IMR-90 (cell line): ENCODE measurements at regions of chr9 and their contacts with region 1.

Region 1: GRCh38 chr9:82202808-82203207 is 214.2 kb downstream of the SPATA31D1 start:
- DNase-seq: peak; percentile 81
- ATAC-seq: peak; percentile 70
- H3K4me3 ChIP-seq: no peak overlapping the region
- H3K27ac ChIP-seq: no peak overlapping the region
- H3K4me1 ChIP-seq: no peaks in the 10 kb centered on the region
- H3K27me3 ChIP-seq: no peaks in the 10 kb centered on the region
- CTCF ChIP-seq: no peak
- POLR2A ChIP-seq: no peak
- RAD21 ChIP-seq: no peak

Region 2: DNA sequence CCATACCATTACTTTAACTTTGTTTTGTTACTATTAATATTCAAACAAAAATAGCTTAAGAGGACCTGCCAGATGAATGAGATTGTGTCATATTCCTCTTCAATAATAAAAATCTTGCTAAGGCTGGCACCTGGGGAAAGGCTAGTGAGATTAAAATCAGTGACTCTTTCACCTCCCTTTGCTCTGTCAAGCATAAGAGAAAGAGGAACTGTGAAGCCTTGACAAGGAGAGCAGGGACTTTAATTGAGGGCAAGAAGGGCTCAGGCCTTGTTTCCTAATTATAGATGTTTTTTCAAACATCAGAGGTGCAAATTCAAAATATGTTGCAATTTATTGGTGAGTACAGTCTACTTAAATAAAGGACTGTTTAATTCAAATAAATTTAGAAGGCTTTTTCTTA is 122.5 kb before region 1 on chr9:
- CTCF ChIA-PET with region 1: no interaction called
- POLR2A ChIA-PET with region 1: no interaction called
- dilution Hi-C with region 1: no loop called
- in situ Hi-C with region 1: no loop called
- intact Hi-C with region 1: loop called (anchors 1 kb)
- DNase-seq: no peak
- ATAC-seq: no peak
- H3K4me3 ChIP-seq: no peak overlapping the region
- H3K27ac ChIP-seq: no peak overlapping the region
- H3K4me1 ChIP-seq: no peaks in the 10 kb centered on the region
- H3K27me3 ChIP-seq: no peaks in the 10 kb centered on the region
- CTCF ChIP-seq: no peak
- POLR2A ChIP-seq: no peak
- RAD21 ChIP-seq: no peak